PC-9 (cell line): ENCODE measurements at regions of chr16 and their contacts with region 1.

Region 1: DNA sequence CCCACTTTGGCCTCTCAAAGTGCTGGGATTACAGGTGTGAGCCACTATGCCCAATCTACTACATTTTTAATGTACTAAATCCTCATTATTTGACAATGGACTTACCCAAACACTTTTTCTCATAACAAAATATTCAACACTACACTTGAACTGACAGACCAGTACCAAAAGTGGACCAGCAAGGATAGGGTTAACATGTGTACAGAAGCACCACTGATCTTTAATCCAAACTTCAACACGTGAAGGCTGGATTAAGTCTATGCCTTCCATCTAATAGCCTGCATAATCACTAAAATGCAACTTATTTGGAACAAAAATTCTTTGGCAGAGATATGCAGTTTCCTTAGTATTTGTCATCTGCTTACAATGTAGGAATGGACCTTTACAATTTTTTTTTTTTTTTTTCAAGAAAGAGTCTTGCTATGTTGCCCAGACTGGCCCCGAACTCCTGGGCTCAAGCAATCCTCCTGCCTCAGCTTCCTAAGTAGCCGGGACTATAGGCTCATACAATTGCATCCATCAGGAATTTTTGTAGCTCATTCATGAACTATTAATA is 60.0 kb upstream of the BCAR1 start:
- DNase-seq: no peak
- H3K4me3 ChIP-seq: no peak overlapping the region
- H3K27ac ChIP-seq: no peak overlapping the region
- H3K4me1 ChIP-seq: peaks cover 11% of the 10 kb centered on the region
- H3K27me3 ChIP-seq: no peaks in the 10 kb centered on the region
- CTCF ChIP-seq: no peak

Region 2: GRCh38 chr16:75279305-75279704 is 32.2 kb before region 1 on chr16:
- CTCF ChIA-PET with region 1: interaction called, 3 read pairs
- POLR2A ChIA-PET with region 1: interaction called, 36 read pairs
- intact Hi-C with region 1: no loop called
- DNase-seq: peak in 1 of 2 experiments; percentile 30
- H3K4me3 ChIP-seq: no peak overlapping the region; the same call in 1 of the 2 replicates
- H3K27ac ChIP-seq: peak overlapping the region; percentile 76
- H3K4me1 ChIP-seq: peaks cover 32% of the 10 kb centered on the region
- H3K27me3 ChIP-seq: no peaks in the 10 kb centered on the region
- CTCF ChIP-seq: no peak

Region 3: GRCh38 chr16:75354170-75354569 is 42.7 kb after region 1 on chr16:
- CTCF ChIA-PET with region 1: interaction called, 15 read pairs
- POLR2A ChIA-PET with region 1: no interaction called
- intact Hi-C with region 1: no loop called
- DNase-seq: no peak
- H3K4me3 ChIP-seq: no peak overlapping the region
- H3K27ac ChIP-seq: no peak overlapping the region
- H3K4me1 ChIP-seq: peaks cover 11% of the 10 kb centered on the region
- H3K27me3 ChIP-seq: no peaks in the 10 kb centered on the region
- CTCF ChIP-seq: no peak